ENCODE measurements at regions of chr19 and their contacts with region 1.

Region 1: DNA sequence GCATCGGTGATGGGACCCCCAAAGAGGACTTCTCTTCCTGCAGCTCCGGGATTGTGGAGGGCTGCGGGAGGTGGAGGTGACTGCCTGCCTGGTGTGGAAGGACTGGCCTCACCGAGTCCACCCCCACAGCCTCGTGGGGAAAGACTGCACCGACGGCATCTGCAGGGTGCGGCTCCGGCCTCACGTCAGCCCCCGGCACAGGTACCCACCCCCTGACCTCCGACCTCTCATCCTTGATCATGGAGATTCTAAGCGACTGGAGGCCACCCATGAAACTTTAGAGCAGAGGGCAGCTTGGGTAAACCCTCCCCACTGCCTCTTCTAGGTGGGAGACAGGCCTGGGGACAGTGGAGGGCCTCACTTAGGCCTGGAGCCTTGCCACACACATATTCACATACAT is 16.8 kb upstream of the CLASRP start:
- DNase-seq: no peak
- ATAC-seq: peak in 1 of 4 donors; percentile 10
- H3K4me3 ChIP-seq: no peak overlapping the region
- H3K27ac ChIP-seq: no peak overlapping the region
- H3K4me1 ChIP-seq: peaks cover 0 to 9% (median 3%) of the 10 kb centered on the region in 4 donors
- H3K27me3 ChIP-seq: no peaks in the 10 kb centered on the region
- CTCF ChIP-seq: no peak
- POLR2A ChIP-seq: no peak

Region 2: GRCh38 chr19:45059278-45059965 is 37.4 kb after region 1 on chr19:
- intact Hi-C with region 1: loop called in 1 of 2 experiments (anchors 5 kb)
- DNase-seq: peak; percentile 73 to 80 (median 74)
- ATAC-seq: peak; percentile 78 to 94 (median 88)
- H3K4me3 ChIP-seq: no peak overlapping the region
- H3K27ac ChIP-seq: no peak overlapping the region
- H3K4me1 ChIP-seq: no peaks in the 10 kb centered on the region
- H3K27me3 ChIP-seq: no peaks in the 10 kb centered on the region
- CTCF ChIP-seq: peak; percentile 86 to 93 (median 89)
- POLR2A ChIP-seq: no peak

Measured in right lobe of liver (tissue), 6 donors.